HepG2 (cell line): ENCODE measurements at regions of chr19 and their contacts with region 1.

Region 1: GRCh38 chr19:12495002-12495802 is 10.6 kb upstream of the ZNF709 start:
- DNase-seq: peak; percentile 95
- ATAC-seq: peak; percentile 94
- H3K4me3 ChIP-seq: peak overlapping the region; percentile 87 to 94 (median 91)
- H3K27ac ChIP-seq: peak overlapping the region; percentile 90
- H3K4me1 ChIP-seq: peaks cover 29% of the 10 kb centered on the region
- H3K27me3 ChIP-seq: no peaks in the 10 kb centered on the region; a peak in 1 of 5 replicates
- CTCF ChIP-seq: peak; percentile 93
- EP300 ChIP-seq: no peak
- POLR2A ChIP-seq: peak; percentile 97
- RAD21 ChIP-seq: peak; percentile 75

Region 2: GRCh38 chr19:12294249-12295158 is 200.7 kb before region 1 on chr19 and contains the start of gene ZNF44:
- CTCF ChIA-PET with region 1: no interaction called
- POLR2A ChIA-PET with region 1: interaction called, 5 read pairs
- in situ Hi-C with region 1: no loop called
- intact Hi-C with region 1: loop called (anchors 5 kb)
- DNase-seq: peak; percentile 99
- ATAC-seq: peak; percentile 94
- H3K4me3 ChIP-seq: peak within 1 kb of the TSS; percentile 83 to 97 (median 89)
- H3K27ac ChIP-seq: peak within 1 kb of the TSS; percentile 91
- H3K4me1 ChIP-seq: peaks cover 39% of the 10 kb centered on the region
- H3K27me3 ChIP-seq: no peaks in the 10 kb centered on the region
- CTCF ChIP-seq: peak; percentile 24; the same call in 1 of the 2 replicates
- EP300 ChIP-seq: 0 out of 4 replicates have a peak, but pooled peaks of 1 of the 2 experiments have one; percentile 15
- POLR2A ChIP-seq: peak; percentile 89 to 94
- RAD21 ChIP-seq: peak; percentile 34; the same call in 1 of the 2 replicates
- total RNA-seq, gene ZNF44: 15.7 and 16.6 TPM in 2 replicates

Region 3: DNA sequence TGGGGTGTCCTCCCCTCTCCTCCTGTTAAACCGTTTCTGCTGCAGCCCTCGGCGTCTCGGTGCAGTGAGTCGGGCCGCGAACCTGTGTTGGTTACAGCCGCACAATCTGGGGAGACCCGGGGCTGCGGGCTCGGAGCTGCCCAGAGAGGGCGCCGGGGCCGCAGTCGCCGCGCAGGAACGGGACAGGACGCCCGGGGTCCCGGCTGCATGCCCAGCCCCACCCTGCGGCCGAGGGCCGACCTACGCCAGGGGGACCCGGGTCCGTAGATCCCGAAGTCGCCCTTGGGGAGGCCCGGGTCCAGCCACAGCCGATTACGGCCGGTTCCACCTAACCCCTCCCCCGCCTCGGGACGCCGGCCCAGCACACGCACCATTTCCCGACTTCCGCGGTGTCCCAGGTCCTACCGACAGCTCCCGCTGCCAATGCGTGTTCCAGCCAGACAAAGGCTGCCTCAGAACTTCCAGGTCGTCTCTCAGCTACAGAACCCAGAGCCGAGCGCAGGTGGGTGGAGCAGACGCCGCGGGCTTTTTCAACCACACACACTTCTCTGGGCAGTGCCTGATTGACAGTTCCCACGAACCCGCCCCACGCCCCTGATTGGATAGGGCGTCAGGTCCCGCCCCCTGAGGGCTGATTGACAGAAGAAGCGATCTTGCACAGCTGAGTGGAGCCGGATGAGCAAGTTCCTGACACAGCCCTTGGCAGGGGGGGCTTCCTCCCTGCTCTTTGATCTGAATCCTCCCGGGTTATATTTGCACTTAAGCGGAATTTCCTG is 54.5 kb before region 1 on chr19 and contains the start of gene ZNF443:
- CTCF ChIA-PET with region 1: no interaction called
- POLR2A ChIA-PET with region 1: interaction called, 13 read pairs
- in situ Hi-C with region 1: no loop called
- intact Hi-C with region 1: no loop called
- DNase-seq: peak; percentile 99
- ATAC-seq: peak; percentile 96
- H3K4me3 ChIP-seq: peak within 1 kb of the TSS; percentile 72 to 96 (median 83)
- H3K27ac ChIP-seq: peak within 1 kb of the TSS; percentile 97
- H3K4me1 ChIP-seq: peaks cover 27% of the 10 kb centered on the region
- H3K27me3 ChIP-seq: no peaks in the 10 kb centered on the region
- CTCF ChIP-seq: no peak
- EP300 ChIP-seq: peak in 1 of 2 experiments; percentile 56; a peak in 2 of 4 replicates
- POLR2A ChIP-seq: peak; percentile 84 to 91
- RAD21 ChIP-seq: 0 out of 2 replicates have a peak, but pooled peaks have one; percentile 37
- total RNA-seq, gene ZNF443: 19.0 and 24.2 TPM in 2 replicates

Region 4: DNA sequence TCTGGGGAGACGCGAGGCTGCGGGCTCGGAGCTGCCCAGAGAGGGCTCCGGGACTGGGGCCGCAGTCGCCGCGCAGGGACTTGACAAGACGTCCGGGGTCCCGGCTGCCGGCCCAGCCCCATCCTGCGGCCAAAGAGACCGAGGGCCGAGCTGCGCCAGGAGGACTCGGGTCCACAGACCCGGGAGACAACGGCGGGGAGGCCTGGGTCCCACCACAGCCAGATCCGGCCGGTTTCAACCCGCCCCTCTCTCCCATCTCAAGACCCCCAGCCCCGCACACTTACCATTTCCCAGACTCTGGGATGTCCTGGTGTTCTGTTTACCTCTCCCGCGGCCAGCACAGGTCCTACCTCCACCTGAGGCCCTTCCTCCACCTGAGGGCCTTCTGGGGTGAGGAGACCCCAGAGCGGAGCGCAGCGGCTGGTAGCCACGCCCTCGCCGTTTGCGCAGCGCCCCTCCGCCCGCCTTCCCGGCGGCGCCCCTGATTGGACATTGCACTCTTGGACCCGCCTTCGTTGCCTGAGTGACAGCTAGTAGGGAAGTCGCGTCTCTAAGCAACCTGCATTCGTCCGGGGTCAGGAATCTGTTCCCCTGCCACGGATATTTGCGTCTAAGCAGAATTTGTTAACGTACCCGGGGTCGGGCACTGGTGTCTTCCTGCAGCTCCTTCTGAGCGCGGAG is 10.7 kb before region 1 on chr19 and contains the start of gene ZNF709:
- CTCF ChIA-PET with region 1: no interaction called
- POLR2A ChIA-PET with region 1: interaction called, 62 read pairs
- in situ Hi-C with region 1: no loop called
- intact Hi-C with region 1: no loop called
- DNase-seq: peak; percentile 86
- ATAC-seq: peak; percentile 94
- H3K4me3 ChIP-seq: peak within 1 kb of the TSS; percentile 88 to 100 (median 93)
- H3K27ac ChIP-seq: peak within 1 kb of the TSS; percentile 57
- H3K4me1 ChIP-seq: peaks cover 37% of the 10 kb centered on the region
- H3K27me3 ChIP-seq: no peaks in the 10 kb centered on the region
- CTCF ChIP-seq: no peak
- EP300 ChIP-seq: no peak
- POLR2A ChIP-seq: peak; percentile 88 to 98
- RAD21 ChIP-seq: no peak; the same call in 1 of the 2 replicates
- total RNA-seq, gene ZNF709: 3.9 and 4.7 TPM in 2 replicates

Region 5: GRCh38 chr19:12551060-12551832 is 56.0 kb after region 1 on chr19 and contains the start of gene ZNF564:
- CTCF ChIA-PET with region 1: no interaction called
- POLR2A ChIA-PET with region 1: interaction called, 27 read pairs
- in situ Hi-C with region 1: no loop called
- intact Hi-C with region 1: no loop called
- DNase-seq: peak; percentile 100
- ATAC-seq: peak; percentile 96
- H3K4me3 ChIP-seq: peak within 1 kb of the TSS; percentile 86 to 92 (median 91)
- H3K27ac ChIP-seq: peak within 1 kb of the TSS; percentile 93
- H3K4me1 ChIP-seq: peaks cover 44% of the 10 kb centered on the region
- H3K27me3 ChIP-seq: no peaks in the 10 kb centered on the region; a peak in 1 of 5 replicates
- CTCF ChIP-seq: peak; percentile 6; the same call in 1 of the 2 replicates
- EP300 ChIP-seq: peak in 1 of 2 experiments; percentile 22; a peak in 2 of 4 replicates
- POLR2A ChIP-seq: peak; percentile 80 to 95
- RAD21 ChIP-seq: 0 out of 2 replicates have a peak, but pooled peaks have one; percentile 26
- total RNA-seq, gene ZNF564: 11.1 and 11.2 TPM in 2 replicates

Region 6: DNA sequence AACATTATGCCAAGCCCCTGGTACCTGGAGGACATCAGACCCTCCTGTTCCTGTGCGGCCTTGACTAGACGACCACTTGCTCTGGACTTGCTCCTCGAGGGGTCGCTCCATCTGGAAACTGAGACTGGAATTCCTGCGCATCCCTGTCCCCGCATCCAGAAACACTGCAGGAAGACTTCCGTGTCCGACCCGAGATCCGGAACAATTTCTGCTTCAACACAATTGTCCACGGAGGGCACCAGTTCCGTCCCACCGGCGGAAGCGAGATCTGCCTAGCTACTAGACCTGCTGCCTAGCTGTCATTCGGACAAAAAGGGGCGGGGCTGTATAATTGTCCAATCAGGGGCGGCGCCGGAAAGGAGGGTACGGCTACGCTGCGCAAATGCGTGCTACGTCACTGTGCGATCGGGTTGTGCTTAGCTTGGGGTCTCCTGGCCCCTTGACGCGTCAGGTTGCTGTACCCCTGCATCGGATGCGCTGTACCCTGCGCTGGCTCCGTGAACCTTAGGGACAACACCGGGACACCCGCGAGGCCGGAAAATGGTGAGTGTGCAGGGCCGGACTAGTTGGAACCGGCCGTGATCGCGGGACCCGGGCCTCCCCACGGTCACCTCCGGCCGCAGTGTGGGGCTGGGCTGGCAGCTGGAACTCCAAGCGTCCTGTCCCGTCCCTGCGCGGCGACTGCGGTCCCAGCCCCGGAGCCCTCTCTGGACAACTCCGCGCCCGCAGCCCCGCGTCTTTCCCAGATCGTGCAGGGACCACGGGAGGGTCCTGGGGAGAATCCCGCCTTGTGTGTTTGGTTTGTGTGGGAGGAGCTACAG is 115.5 kb after region 1 on chr19 and contains the starts of genes ZNF490 and ZNF791:
- CTCF ChIA-PET with region 1: no interaction called
- POLR2A ChIA-PET with region 1: interaction called, 17 read pairs
- in situ Hi-C with region 1: no loop called
- intact Hi-C with region 1: no loop called
- DNase-seq: peak; percentile 97
- ATAC-seq: peak; percentile 98
- H3K4me3 ChIP-seq: peak within 1 kb of the TSS; percentile 79 to 97 (median 94)
- H3K27ac ChIP-seq: peak within 1 kb of the TSS; percentile 88
- H3K4me1 ChIP-seq: peaks cover 9% of the 10 kb centered on the region; the same call in 1 of the 2 replicates
- H3K27me3 ChIP-seq: no peaks in the 10 kb centered on the region; a peak in 1 of 5 replicates
- CTCF ChIP-seq: peak; percentile 40
- EP300 ChIP-seq: peak in 1 of 2 experiments; percentile 68; a peak in 2 of 4 replicates
- POLR2A ChIP-seq: peak; percentile 84 to 92
- RAD21 ChIP-seq: no peak; the same call in 1 of the 2 replicates
- total RNA-seq, gene ZNF490: 2.9 and 5.2 TPM in 2 replicates
- total RNA-seq, gene ZNF791: 17.4 and 21.3 TPM in 2 replicates